Right cardiac atrium (tissue), 5 donors: ENCODE measurements at regions of chr3 and their contacts with region 1.

Region 1: GRCh38 chr3:169668957-169669681 is 5.6 kb upstream of the MECOM start:
- DNase-seq: peak; percentile 86 to 94 (median 92)
- ATAC-seq: peak; percentile 98
- H3K4me3 ChIP-seq: peak overlapping the region; percentile 35
- H3K27ac ChIP-seq: no peak overlapping the region
- H3K4me1 ChIP-seq: no peaks in the 10 kb centered on the region
- H3K27me3 ChIP-seq: no peaks in the 10 kb centered on the region

Region 2: GRCh38 chr3:169041677-169042171 is 627.4 kb before region 1 on chr3:
- intact Hi-C with region 1: loop called in 1 of 4 experiments (anchors 10 kb)
- DNase-seq: no peak
- ATAC-seq: peak; percentile 47 to 72
- H3K4me3 ChIP-seq: no peak overlapping the region
- H3K27ac ChIP-seq: no peak overlapping the region
- H3K4me1 ChIP-seq: no peaks in the 10 kb centered on the region
- H3K27me3 ChIP-seq: no peaks in the 10 kb centered on the region

Region 3: GRCh38 chr3:169149349-169149890 is 519.7 kb before region 1 on chr3:
- intact Hi-C with region 1: loop called (anchors 5 to 10 kb)
- DNase-seq: peak; percentile 86 to 94 (median 93)
- ATAC-seq: peak; percentile 84
- H3K4me3 ChIP-seq: peak overlapping the region; percentile 36
- H3K27ac ChIP-seq: peak overlapping the region; percentile 93
- H3K4me1 ChIP-seq: no peaks in the 10 kb centered on the region
- H3K27me3 ChIP-seq: no peaks in the 10 kb centered on the region

Region 4: GRCh38 chr3:169390271-169391230 is 278.6 kb before region 1 on chr3:
- intact Hi-C with region 1: loop called in 3 of 4 experiments (anchors 10 kb)
- DNase-seq: no peak
- ATAC-seq: peak in 1 of 2 donors; percentile 24
- H3K4me3 ChIP-seq: no peak overlapping the region
- H3K27ac ChIP-seq: no peak overlapping the region
- H3K4me1 ChIP-seq: no peaks in the 10 kb centered on the region
- H3K27me3 ChIP-seq: no peaks in the 10 kb centered on the region

Region 5: DNA sequence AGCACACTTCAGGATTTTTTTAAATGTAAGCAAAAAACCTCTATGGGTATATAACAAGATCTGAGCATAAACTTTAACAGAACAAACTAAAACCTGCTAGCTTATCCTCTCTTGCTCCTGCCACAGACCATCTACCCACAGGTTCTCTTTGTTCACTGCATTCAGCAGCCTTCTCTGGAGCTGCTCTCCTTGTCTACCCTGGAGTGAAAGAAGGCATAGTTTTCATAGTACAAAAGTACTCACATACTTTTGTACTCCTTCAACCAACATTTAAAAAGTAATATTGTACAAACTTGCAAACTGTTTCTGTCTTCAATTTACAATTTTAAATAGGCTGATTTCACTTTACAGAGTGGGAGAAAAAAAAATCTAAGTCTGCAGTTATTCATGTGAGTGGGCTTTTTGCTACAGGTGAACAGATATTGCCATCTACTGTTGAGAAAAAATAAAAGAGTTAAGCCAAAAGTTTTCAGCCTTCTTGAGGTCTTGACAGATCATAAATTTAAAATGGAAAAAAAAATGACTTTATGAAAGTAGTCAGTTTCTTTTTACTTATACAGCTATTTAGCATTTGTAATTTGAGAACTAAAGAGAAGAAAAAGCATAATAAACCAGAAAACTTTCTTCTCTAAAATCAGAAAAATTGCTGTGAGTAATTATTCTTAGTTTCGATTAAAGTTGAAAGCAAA is 75.4 kb after region 1 on chr3:
- intact Hi-C with region 1: loop called in 1 of 4 experiments (anchors 5 kb)
- DNase-seq: no peak
- ATAC-seq: peak; percentile 39 to 47
- H3K4me3 ChIP-seq: no peak overlapping the region
- H3K27ac ChIP-seq: no peak overlapping the region
- H3K4me1 ChIP-seq: no peaks in the 10 kb centered on the region
- H3K27me3 ChIP-seq: peaks cover 3% of the 10 kb centered on the region